ENCODE measurements at regions of chr16 and their contacts with region 1.

Region 1: DNA sequence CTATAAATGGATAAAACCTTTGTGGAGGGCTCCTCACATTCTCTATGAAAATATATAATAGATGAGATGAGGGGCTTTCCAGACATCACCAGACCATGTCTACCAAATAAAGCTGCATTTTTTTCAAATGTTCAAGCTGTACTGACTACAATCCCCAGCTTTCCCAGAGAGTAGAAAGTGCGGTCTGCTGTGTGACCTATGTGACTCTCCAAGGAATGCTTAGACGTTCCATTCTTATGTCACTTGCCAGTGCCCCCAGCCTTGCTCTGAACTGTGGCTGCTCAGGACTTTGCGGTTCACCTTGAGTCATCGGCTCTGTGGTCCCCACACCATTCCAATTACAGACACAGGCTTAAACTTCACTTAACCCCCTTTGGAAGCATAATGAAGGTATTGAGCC is 47.8 kb upstream of the SCNN1B start:
- DNase-seq: peak; percentile 75
- H3K4me3 Mint-ChIP-seq: no peak overlapping the region
- H3K27ac Mint-ChIP-seq: peak overlapping the region; percentile 82
- H3K4me1 Mint-ChIP-seq: peaks cover 40% of the 10 kb centered on the region
- H3K27me3 Mint-ChIP-seq: no peaks in the 10 kb centered on the region
- CTCF ChIP-seq: no peak

Region 2: GRCh38 chr16:23005951-23006350 is 248.4 kb before region 1 on chr16:
- CTCF ChIA-PET with region 1: no interaction called
- POLR2A ChIA-PET with region 1: no interaction called
- intact Hi-C with region 1: no loop called
- DNase-seq: no peak
- H3K4me3 Mint-ChIP-seq: no peak overlapping the region
- H3K27ac Mint-ChIP-seq: no peak overlapping the region
- H3K4me1 Mint-ChIP-seq: no peaks in the 10 kb centered on the region
- H3K27me3 Mint-ChIP-seq: peaks cover 73% of the 10 kb centered on the region
- CTCF ChIP-seq: no peak

Region 3: GRCh38 chr16:23207493-23207892 is 46.8 kb before region 1 on chr16:
- CTCF ChIA-PET with region 1: interaction called, 3 read pairs
- POLR2A ChIA-PET with region 1: interaction called, 19 read pairs
- intact Hi-C with region 1: no loop called
- DNase-seq: no peak
- H3K4me3 Mint-ChIP-seq: no peak overlapping the region
- H3K27ac Mint-ChIP-seq: no peak overlapping the region
- H3K4me1 Mint-ChIP-seq: peaks cover 7% of the 10 kb centered on the region
- H3K27me3 Mint-ChIP-seq: no peaks in the 10 kb centered on the region
- CTCF ChIP-seq: no peak

Region 4: DNA sequence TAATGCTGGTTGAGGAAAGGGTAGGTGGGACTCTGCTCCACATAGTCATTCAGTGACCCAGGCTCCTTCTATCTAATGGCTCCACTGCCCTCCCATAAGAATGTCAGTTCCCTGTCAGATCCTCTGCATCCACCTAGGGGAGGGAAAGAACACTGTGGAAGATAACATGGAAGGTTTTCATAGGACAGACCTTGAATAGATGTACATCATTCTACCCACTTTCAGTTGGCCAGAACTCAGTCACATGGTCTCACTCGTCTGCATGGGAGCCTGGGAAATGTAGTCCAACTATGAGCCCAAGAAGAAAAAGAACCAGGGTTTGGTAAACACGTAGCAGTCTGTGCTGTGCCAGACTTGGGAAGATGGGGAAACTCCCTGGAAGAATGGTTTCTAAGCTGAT is 20.6 kb after region 1 on chr16:
- CTCF ChIA-PET with region 1: interaction called, 6 read pairs
- POLR2A ChIA-PET with region 1: interaction called, 204 read pairs
- intact Hi-C with region 1: no loop called
- DNase-seq: no peak
- H3K4me3 Mint-ChIP-seq: no peak overlapping the region
- H3K27ac Mint-ChIP-seq: no peak overlapping the region
- H3K4me1 Mint-ChIP-seq: peaks cover 32% of the 10 kb centered on the region
- H3K27me3 Mint-ChIP-seq: no peaks in the 10 kb centered on the region
- CTCF ChIP-seq: no peak

Region 5: DNA sequence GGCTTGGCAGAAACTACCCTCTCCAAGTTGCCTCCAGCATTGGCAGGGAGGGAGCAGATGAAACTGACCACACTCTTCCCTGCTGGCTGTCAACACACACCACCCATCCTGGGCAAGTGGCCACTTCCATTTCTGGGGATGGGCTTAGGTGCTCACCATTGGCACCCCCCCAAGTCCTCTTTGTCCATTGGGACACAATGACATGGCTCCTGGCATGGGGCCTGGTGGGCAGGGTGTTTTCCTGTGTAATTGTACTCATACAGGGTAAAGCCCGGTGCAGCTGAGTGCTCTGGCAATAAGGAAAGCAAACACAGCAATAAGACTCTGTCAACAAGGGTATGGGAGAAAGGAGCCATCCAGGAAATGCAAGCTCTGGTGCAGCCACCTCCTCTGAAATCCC is 70.4 kb after region 1 on chr16:
- CTCF ChIA-PET with region 1: no interaction called
- POLR2A ChIA-PET with region 1: interaction called, 12 read pairs
- intact Hi-C with region 1: no loop called
- DNase-seq: peak; percentile 95
- H3K4me3 Mint-ChIP-seq: peak overlapping the region; percentile 57
- H3K27ac Mint-ChIP-seq: peak overlapping the region; percentile 95
- H3K4me1 Mint-ChIP-seq: peaks cover 16% of the 10 kb centered on the region
- H3K27me3 Mint-ChIP-seq: no peaks in the 10 kb centered on the region
- CTCF ChIP-seq: no peak

Region 6: DNA sequence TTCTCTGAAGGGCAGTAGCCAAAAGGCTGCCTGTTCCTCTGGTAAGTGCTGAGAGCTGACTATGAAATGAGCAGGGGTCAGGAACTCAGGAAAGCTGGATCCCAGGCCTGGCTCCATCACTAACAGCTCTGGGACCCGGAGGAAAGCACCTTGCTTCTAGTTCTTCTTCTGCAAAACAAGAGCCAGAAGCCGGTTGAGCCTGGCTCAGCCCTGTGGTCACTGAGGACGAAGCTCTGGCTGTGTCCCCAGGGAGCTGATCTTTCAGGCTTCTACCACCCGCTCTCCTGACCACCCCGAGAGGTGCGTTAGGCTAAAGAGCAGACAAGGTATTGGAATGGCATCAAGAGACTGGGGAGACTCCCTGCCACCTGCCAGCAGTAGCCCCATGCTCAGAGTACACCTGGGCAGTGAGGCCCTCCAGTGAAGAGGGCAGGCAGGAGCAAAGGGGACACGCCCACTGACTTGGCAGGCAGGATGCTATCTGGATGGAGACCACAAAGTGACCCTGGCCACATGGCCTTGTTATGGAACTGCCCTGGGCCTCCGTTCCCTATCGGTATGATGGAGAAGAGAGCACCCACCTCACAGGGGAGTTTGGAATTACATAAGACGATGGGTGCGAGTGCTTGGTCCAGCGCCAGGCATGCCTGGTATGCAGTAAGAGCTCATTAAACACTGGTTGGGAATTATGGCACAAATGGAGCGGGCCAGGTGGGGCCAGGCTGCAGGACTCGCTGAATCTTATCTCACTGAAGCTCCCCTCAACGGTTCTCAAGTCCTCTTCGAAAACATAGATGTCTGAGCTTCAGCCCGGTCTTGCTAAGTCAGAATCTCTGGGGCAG is 137.3 kb after region 1 on chr16:
- CTCF ChIA-PET with region 1: interaction called, 9 read pairs
- POLR2A ChIA-PET with region 1: interaction called, 37 read pairs
- intact Hi-C with region 1: no loop called
- DNase-seq: peak; percentile 29
- H3K4me3 Mint-ChIP-seq: no peak overlapping the region
- H3K27ac Mint-ChIP-seq: peak overlapping the region; percentile 92
- H3K4me1 Mint-ChIP-seq: peaks cover 36% of the 10 kb centered on the region
- H3K27me3 Mint-ChIP-seq: no peaks in the 10 kb centered on the region
- CTCF ChIP-seq: no peak

Region 7: DNA sequence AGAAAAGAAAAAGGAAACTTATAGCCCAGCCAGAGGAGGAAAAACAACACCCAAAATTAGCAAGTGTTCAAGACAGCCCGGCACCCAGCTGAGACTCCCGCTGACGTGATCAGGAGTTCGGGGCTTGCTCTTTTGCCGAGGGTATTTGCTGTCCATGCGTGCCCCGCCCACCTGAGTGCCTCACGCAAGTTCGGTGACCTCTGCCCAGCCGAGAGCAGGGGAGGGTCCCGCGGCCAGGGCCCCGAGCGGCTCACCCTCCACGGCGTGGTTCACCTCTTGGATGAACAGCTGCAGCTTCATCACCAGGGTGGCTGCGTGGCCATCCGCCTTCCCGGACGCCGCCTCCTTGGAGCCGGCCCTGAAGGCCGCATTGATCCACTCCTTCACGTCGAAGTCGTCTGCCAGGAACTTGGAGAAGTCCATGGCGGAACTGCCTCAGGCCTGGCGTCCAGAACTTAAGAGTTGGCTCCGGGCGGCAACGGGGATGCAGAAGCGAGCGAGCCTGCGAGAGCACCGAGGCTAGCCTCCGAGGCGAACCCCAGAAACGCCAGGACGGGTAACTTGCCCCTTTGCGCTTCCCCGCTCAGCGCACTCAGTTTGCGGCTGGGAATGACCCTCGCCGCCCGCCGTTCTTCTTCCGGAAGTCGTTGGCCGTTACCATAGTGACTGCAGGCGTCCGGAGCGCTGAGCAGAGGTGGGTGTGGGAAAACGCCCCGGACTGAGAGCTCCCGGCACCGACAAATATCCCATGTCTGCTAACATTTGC is 198.4 kb after region 1 on chr16 and contains the start of gene COG7:
- CTCF ChIA-PET with region 1: no interaction called
- POLR2A ChIA-PET with region 1: no interaction called
- intact Hi-C with region 1: no loop called
- DNase-seq: peak; percentile 82
- H3K4me3 Mint-ChIP-seq: peak within 1 kb of the TSS; percentile 90
- H3K27ac Mint-ChIP-seq: peak within 1 kb of the TSS; percentile 89
- H3K4me1 Mint-ChIP-seq: peaks cover 14% of the 10 kb centered on the region
- H3K27me3 Mint-ChIP-seq: no peaks in the 10 kb centered on the region
- CTCF ChIP-seq: no peak
- total RNA-seq, gene COG7: 10.0 and 16.7 TPM in 2 replicates

Measured in MCF 10A (cell line).